Uterus (tissue), 4 donors: ENCODE measurements at regions of chr11 and their contacts with region 1.

Region 1: GRCh38 chr11:76207642-76208401 is 1.5 kb upstream of the WNT11 start:
- DNase-seq: peak; percentile 78 to 86
- H3K4me3 ChIP-seq: peak overlapping the region; percentile 41 to 42
- H3K27ac ChIP-seq: peak overlapping the region; percentile 5 to 69
- H3K4me1 ChIP-seq: peaks cover 0 to 36% of the 10 kb centered on the region in 2 donors
- H3K27me3 ChIP-seq: no peaks in the 10 kb centered on the region
- CTCF ChIP-seq: peak; percentile 90 to 99 (median 96)
- POLR2A ChIP-seq: peak in 1 of 2 donors; percentile 2

Region 2: GRCh38 chr11:76277298-76278175 is 69.7 kb after region 1 on chr11:
- intact Hi-C with region 1: no loop called
- DNase-seq: no peak
- H3K4me3 ChIP-seq: no peak overlapping the region
- H3K27ac ChIP-seq: no peak overlapping the region
- H3K4me1 ChIP-seq: no peaks in the 10 kb centered on the region
- H3K27me3 ChIP-seq: no peaks in the 10 kb centered on the region
- CTCF ChIP-seq: no peak
- POLR2A ChIP-seq: no peak

Region 3: GRCh38 chr11:76318744-76319384 is 111.0 kb after region 1 on chr11:
- intact Hi-C with region 1: loop called (anchors 5 kb)
- DNase-seq: peak; percentile 80
- H3K4me3 ChIP-seq: no peak overlapping the region
- H3K27ac ChIP-seq: no peak overlapping the region
- H3K4me1 ChIP-seq: peaks cover 0 to 5% of the 10 kb centered on the region in 2 donors
- H3K27me3 ChIP-seq: peaks cover 0 to 9% of the 10 kb centered on the region in 2 donors
- CTCF ChIP-seq: peak; percentile 84 to 93 (median 90)
- POLR2A ChIP-seq: no peak